PC-9 (cell line): ENCODE measurements at regions of chr13 and their contacts with region 1.

Region 1: GRCh38 chr13:97194479-97194878 is 27.7 kb upstream of the MBNL2 start:
- DNase-seq: peak; percentile 76 to 98
- H3K4me3 ChIP-seq: peak overlapping the region; percentile 27; the same call in 1 of the 2 replicates
- H3K27ac ChIP-seq: peak overlapping the region; percentile 85
- H3K4me1 ChIP-seq: peaks cover 79% of the 10 kb centered on the region
- H3K27me3 ChIP-seq: no peaks in the 10 kb centered on the region
- CTCF ChIP-seq: no peak

Region 2: DNA sequence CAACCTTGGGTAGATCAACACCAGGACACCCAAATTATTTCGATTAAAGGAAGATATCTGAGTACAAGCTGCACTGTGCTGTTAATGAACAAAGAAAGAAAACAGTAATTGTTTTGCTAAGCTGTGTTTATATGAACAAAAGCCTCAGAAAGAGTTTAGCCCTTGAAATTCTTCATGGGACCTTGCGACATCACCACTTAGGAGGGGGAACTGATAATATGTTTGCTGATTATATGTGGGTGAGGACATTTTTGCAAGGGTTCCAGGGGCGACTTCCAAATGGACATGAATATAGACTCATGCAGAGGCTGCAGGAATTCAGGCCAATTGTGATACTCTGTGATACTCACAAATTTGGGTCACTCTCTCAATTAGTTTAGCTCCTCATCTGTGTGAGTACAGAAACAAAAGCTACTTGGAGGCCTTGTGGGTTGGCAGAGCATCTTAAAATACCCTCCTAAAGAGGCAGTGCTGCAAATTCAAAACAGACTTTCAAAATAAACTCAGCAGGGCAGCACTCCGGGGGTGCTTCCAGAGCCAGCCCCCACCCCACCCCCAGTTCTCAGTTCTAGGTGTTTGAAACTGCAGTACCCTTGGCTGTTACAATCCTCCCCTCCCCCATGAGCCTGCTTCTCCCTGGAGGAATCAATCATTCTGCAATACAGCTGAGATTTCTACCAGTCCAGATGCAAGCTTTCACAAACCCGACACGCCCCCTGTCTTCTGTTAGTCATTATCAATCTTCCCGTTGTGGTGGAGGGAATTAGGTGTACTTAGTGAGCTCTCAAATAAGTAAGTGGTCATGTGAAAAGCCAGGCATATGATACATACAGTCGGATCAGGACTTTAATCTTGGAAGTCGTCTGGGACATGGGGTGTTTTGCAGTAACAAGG is 69.3 kb before region 1 on chr13:
- CTCF ChIA-PET with region 1: no interaction called
- POLR2A ChIA-PET with region 1: interaction called, 6 read pairs
- intact Hi-C with region 1: loop called (anchors 1 kb)
- DNase-seq: peak; percentile 39 to 90
- H3K4me3 ChIP-seq: peak overlapping the region; percentile 37; the same call in 1 of the 2 replicates
- H3K27ac ChIP-seq: peak overlapping the region; percentile 81
- H3K4me1 ChIP-seq: peaks cover 81% of the 10 kb centered on the region
- H3K27me3 ChIP-seq: no peaks in the 10 kb centered on the region
- CTCF ChIP-seq: peak; percentile 55; the same call in 1 of the 2 replicates

Region 3: GRCh38 chr13:97174638-97175037 is 19.8 kb before region 1 on chr13:
- CTCF ChIA-PET with region 1: no interaction called
- POLR2A ChIA-PET with region 1: no interaction called
- intact Hi-C with region 1: loop called (anchors 2 kb)
- DNase-seq: no peak
- H3K4me3 ChIP-seq: no peak overlapping the region
- H3K27ac ChIP-seq: no peak overlapping the region
- H3K4me1 ChIP-seq: peaks cover 22% of the 10 kb centered on the region
- H3K27me3 ChIP-seq: no peaks in the 10 kb centered on the region
- CTCF ChIP-seq: no peak

Region 4: DNA sequence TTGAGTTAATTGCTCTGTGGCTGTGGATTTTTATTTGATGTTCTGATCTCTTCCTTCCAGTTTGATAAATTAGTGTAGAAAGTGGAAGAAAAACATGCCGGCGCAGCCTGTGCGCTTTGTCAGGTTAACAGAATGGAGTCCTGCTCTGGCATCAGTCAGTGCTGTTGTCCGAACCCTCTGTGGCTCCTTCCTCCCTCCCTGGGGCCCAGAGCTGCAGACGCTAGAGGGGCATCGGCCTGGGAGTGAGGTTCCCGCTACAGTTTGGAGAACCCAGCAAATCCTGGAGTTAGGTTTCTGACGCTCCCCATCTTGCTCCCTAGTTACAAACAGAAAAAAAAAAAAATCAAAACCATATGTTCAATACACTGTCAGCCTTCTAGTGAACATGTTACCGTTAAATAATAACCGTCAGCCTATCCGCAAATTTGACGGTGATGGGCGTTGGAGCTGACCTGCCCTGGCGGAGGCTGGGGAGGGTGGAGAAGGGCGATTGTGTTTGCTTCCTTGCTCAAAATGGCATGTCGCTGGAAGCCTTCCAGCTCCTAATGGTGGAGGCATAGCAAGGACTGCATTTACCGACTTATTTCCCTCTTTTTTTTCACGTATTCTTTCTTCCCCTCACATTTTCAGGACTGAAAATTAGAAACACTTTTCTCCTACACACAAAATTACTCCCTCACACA is 41.2 kb after region 1 on chr13:
- CTCF ChIA-PET with region 1: no interaction called
- POLR2A ChIA-PET with region 1: no interaction called
- intact Hi-C with region 1: no loop called
- DNase-seq: no peak
- H3K4me3 ChIP-seq: no peak overlapping the region
- H3K27ac ChIP-seq: no peak overlapping the region
- H3K4me1 ChIP-seq: 0 out of 2 replicates have a peak, but pooled peaks cover 9% of the 10 kb centered on the region
- H3K27me3 ChIP-seq: no peaks in the 10 kb centered on the region
- CTCF ChIP-seq: no peak

Region 5: DNA sequence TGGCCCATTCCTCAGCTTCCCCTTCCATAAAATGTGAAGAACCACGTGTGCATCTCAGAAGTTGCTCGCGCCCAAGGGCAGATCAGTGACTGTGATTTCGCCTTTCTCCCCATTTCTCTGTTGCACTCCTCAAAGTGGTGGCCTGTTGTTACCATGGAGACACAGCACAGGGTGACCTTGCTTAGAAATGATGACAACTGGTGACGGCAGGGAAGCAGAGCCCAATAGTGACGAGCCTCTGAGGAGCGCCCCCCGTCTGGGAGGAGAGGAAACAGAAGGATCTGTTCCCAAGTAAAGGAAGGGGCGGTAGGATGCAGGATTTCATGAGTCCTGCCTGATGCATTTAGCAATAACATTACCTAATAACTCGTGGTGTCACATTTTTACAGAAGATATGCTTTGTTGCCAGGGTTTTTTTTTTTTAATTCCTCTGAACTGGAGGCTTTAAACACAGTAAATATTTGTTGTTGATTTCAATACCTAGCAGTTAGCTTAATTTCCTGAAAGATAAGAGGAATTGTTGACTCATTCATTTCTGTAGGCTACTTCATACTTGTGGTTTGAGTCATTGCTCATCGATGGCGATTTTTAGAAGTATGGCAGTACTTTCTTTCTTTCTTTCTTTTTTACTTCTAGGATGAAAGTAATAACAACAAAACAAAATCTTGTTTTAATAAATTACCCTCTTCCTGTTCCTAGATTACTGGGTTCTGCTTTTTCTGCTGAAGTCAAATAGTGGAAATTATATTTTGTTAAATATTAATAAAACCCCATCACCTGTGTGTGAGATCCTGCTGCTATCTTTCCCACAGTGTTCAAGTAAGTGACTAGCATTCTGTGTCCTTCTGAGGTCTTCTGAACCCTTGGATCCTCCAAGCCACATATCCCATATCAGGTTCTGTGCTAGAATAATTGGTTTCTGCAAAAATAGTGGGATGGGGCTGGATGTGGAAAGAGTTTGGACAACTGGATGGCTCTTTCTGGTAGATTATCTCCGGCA is 63.6 kb after region 1 on chr13:
- CTCF ChIA-PET with region 1: no interaction called
- POLR2A ChIA-PET with region 1: interaction called, 4 read pairs
- intact Hi-C with region 1: loop called (anchors 1 kb)
- DNase-seq: peak; percentile 71 to 100
- H3K4me3 ChIP-seq: peak overlapping the region; percentile 34
- H3K27ac ChIP-seq: peak overlapping the region; percentile 98
- H3K4me1 ChIP-seq: peaks cover 82% of the 10 kb centered on the region
- H3K27me3 ChIP-seq: no peaks in the 10 kb centered on the region
- CTCF ChIP-seq: peak; percentile 56; the same call in 1 of the 2 replicates

Region 6: GRCh38 chr13:97295283-97296182 is 101.1 kb after region 1 on chr13:
- CTCF ChIA-PET with region 1: no interaction called
- POLR2A ChIA-PET with region 1: no interaction called
- intact Hi-C with region 1: no loop called
- DNase-seq: peak in 1 of 2 experiments; percentile 77
- H3K4me3 ChIP-seq: no peak overlapping the region
- H3K27ac ChIP-seq: peak overlapping the region; percentile 8
- H3K4me1 ChIP-seq: peaks cover 18% of the 10 kb centered on the region
- H3K27me3 ChIP-seq: no peaks in the 10 kb centered on the region
- CTCF ChIP-seq: no peak